Ovary (tissue), 10 donors: ENCODE measurements at regions of chr3 and their contacts with region 1.

Region 1: GRCh38 chr3:139718415-139718814 is 40.6 kb upstream of the NMNAT3 start:
- DNase-seq: peak; percentile 53 to 76 (median 67)
- H3K4me3 ChIP-seq: no peak overlapping the region
- H3K27ac ChIP-seq: peak overlapping the region in 1 of 2 donors; percentile 54
- H3K4me1 ChIP-seq: peaks cover 8% of the 10 kb centered on the region
- H3K27me3 ChIP-seq: no peaks in the 10 kb centered on the region
- CTCF ChIP-seq: peak; percentile 30 to 65 (median 52)
- EP300 ChIP-seq: no peak
- POLR2A ChIP-seq: no peak

Region 2: GRCh38 chr3:139764936-139765335 is 46.5 kb after region 1 on chr3:
- intact Hi-C with region 1: loop called in 1 of 4 experiments (anchors 10 kb)
- DNase-seq: no peak
- H3K4me3 ChIP-seq: no peak overlapping the region
- H3K27ac ChIP-seq: no peak overlapping the region
- H3K4me1 ChIP-seq: peaks cover 2% of the 10 kb centered on the region
- H3K27me3 ChIP-seq: no peaks in the 10 kb centered on the region
- CTCF ChIP-seq: no peak
- EP300 ChIP-seq: no peak
- POLR2A ChIP-seq: no peak

Region 3: DNA sequence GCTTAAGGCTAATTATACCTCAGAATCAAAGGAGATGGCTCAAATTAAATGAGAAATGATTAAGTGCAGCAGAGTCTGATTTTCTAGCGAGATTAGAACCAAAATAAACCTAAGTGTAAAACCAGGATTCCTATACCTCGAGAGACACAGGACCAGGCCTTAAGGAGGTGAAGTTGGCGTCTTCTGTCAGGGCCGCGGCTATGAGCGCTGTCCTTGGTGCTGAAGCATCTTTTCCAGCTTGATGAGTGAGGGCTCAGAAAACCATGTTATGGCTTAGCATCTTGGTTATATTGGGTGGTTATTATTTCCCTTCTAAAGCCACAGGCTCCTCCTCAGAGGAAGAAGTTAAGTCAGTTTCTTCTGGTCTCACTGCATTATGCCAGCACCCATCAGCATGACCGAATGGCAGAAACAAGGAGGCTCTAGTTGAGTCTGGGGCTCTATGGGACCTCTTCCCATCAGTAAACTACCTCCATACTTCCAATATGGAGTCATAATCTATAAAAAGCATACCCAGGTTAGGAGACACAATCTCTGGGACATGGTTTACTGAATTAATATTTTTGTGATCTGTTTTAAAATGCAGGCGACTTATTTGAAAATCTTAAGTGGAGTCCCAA is 79.4 kb after region 1 on chr3:
- intact Hi-C with region 1: no loop called
- DNase-seq: peak; percentile 46 to 71 (median 68)
- H3K4me3 ChIP-seq: no peak overlapping the region
- H3K27ac ChIP-seq: no peak overlapping the region
- H3K4me1 ChIP-seq: no peaks in the 10 kb centered on the region
- H3K27me3 ChIP-seq: no peaks in the 10 kb centered on the region
- CTCF ChIP-seq: no peak
- EP300 ChIP-seq: no peak
- POLR2A ChIP-seq: no peak

Region 4: DNA sequence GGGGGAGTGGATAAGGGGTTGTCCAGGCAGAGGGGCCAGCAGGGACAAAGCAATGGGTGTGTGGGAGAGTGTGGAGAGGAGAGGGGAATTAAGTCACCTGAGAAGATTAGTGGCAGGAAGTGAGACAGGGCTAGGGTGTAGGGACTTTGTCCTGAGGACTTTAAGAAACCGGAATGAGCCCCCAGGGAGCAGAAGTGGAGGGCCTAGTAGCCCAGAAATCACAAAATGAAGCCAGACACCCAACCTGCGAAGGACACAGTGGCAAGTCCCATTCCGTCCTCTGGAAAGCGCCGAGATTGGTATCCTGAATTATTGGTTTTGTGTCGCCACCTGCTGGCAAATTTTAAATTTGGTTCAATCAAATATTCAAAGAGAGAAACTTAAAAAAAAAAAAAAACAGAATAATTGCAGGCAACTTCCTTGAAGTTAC is 1145.2 kb after region 1 on chr3:
- intact Hi-C with region 1: loop called in 1 of 4 experiments (anchors 10 kb)
- DNase-seq: peak; percentile 47 to 82 (median 63)
- H3K4me3 ChIP-seq: no peak overlapping the region
- H3K27ac ChIP-seq: no peak overlapping the region
- H3K4me1 ChIP-seq: peaks cover 1% of the 10 kb centered on the region
- H3K27me3 ChIP-seq: no peaks in the 10 kb centered on the region
- CTCF ChIP-seq: peak; percentile 29 to 62 (median 58)
- EP300 ChIP-seq: no peak
- POLR2A ChIP-seq: no peak